Endothelial cell of umbilical vein (primary cell): ENCODE measurements at regions of chr4 and their contacts with region 1.

Region 1: DNA sequence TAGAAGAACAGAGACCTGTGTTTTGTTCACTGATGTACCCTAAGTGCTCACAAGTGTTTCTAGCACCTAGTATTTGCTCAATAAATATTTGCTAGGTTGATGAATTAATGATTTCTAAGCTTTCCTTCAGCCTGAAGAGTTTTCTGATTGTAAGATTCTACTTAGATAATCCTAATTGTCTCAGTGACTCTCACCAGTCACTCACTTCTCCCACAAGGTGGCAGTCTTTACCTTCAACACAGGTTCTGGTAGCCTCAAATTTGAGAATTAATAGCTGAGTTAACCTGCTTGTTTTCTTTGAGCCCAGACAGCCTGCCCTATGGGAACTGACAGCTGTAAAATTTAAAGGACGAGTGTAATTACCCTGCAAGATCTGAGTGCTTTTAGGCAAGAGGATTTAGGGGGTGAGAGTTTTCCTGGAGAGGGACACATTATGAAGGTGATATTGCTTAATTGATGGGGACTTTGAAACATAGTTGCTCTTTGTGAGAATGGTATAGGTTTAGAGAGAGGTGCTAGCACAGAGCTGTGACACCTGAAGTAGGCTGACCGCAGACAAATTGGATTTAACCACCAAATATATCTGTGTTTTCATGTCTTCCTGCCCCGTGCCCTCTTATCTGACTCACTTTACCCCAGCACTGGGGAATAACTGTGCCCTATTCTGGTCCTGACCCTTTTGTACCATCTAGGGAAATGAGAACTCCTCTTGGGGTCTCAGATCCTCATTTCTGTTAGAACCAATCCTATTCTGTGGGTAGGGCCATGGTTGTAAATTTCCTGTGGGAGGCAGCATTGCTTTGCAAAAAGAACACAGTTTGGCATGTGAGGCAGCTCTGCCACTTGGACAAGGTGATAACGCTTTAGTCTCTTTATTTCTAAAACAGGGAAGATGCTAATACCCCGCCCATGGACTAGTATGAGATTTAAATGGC is 27.7 kb downstream of the CD38 start:
- DNase-seq: peak; percentile 58
- H3K4me3 ChIP-seq: no peak overlapping the region
- H3K27ac ChIP-seq: no peak overlapping the region
- H3K4me1 ChIP-seq: peaks cover 4% of the 10 kb centered on the region
- H3K27me3 ChIP-seq: peaks cover 15 to 28% of the 10 kb centered on the region in 2 experiments
- CTCF ChIP-seq: peak; percentile 63 to 65
- POLR2A ChIP-seq: no peak

Region 2: DNA sequence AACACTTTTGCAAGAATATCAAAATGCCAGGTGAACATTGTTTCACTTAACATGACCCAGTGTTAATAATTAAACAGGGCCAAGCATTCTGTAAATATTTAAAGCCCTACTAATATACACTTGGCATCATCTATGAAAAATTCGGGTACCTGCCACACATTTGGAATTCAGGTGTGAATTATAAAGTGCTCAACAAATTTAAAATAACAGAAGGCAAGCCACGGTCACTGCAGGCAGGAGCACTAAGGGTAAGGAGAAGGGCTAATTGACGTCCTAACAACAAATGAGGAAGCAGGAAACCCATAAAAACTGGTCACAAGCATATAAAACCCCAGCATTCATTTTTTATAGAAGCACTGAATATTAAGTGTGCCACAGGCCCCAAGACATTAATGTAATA is 847.4 kb before region 1 on chr4:
- CTCF ChIA-PET with region 1: no interaction called
- POLR2A ChIA-PET with region 1: no interaction called
- dilution Hi-C with region 1: no loop called
- intact Hi-C with region 1: no loop called
- DNase-seq: no peak
- H3K4me3 ChIP-seq: no peak overlapping the region
- H3K27ac ChIP-seq: no peak overlapping the region
- H3K4me1 ChIP-seq: no peaks in the 10 kb centered on the region
- H3K27me3 ChIP-seq: no peaks in the 10 kb centered on the region
- CTCF ChIP-seq: no peak
- POLR2A ChIP-seq: no peak

Region 3: DNA sequence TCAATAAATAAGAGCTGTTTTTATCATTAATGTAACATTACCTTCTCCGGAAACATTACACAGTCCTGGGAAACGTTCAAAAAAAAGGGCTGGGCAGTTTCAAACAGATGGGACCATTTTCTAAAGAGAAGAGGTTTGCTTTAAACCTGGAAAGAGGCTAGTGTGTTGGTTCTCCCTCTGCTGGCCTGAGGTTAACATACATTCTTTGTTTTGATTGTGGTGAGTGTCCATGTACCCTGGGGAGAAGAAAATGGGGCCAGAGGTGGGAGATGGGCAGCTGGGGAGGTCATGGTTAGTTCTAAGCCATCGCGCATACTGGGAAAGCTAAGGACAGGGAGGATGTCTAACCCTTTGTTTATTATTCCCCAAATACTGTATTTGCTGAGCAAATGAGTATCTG is 608.8 kb before region 1 on chr4:
- CTCF ChIA-PET with region 1: no interaction called
- POLR2A ChIA-PET with region 1: no interaction called
- dilution Hi-C with region 1: no loop called
- intact Hi-C with region 1: no loop called
- DNase-seq: peak; percentile 5
- H3K4me3 ChIP-seq: no peak overlapping the region
- H3K27ac ChIP-seq: no peak overlapping the region
- H3K4me1 ChIP-seq: no peaks in the 10 kb centered on the region
- H3K27me3 ChIP-seq: no peaks in the 10 kb centered on the region
- CTCF ChIP-seq: no peak
- POLR2A ChIP-seq: no peak

Region 4: DNA sequence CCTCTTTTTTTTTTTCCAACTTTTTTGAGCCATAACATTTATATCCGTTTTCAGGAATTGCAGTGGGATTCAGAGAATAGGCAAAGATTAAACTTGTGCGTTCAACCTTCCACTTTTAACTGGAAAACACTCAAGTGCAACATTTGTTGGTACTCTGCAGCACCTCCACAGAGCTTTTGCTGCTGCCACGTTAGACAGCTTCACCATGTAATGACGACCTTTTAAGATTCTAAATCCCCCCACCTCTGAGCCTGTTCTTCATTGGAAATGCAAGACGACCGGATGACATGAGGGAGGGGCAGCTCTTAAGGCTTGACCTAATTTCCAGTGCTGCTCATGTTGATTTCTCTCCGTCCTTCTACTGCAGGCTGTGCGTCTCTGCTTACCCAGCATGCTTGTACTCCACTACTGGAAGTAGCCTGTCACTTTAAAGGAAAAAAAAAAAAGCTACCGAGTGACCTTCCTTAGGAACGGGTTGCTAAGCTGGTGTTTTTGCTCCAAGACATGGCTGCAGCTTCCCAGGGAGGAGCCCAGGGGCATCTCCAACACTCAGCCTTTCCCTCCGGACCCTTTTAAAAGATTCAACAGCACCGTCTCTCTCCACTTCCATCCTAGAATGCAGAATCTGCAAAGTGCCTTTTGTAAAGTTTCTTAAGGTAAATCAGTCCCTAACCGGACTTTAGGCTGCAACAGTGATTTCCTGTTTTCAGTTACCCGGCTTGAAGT is 336.3 kb before region 1 on chr4 and contains the start of gene CC2D2A:
- CTCF ChIA-PET with region 1: interaction called, 10 read pairs
- POLR2A ChIA-PET with region 1: no interaction called
- dilution Hi-C with region 1: no loop called
- intact Hi-C with region 1: no loop called
- DNase-seq: peak; percentile 67
- H3K4me3 ChIP-seq: peak within 1 kb of the TSS; percentile 44 to 83 (median 51)
- H3K27ac ChIP-seq: no peak within 1 kb of the TSS
- H3K4me1 ChIP-seq: peaks cover 3% of the 10 kb centered on the region
- H3K27me3 ChIP-seq: peaks cover 2 to 10% of the 10 kb centered on the region in 2 experiments
- CTCF ChIP-seq: no peak
- POLR2A ChIP-seq: no peak
- total RNA-seq, gene CC2D2A: 13.2 and 22.4 TPM in 2 replicates

Region 5: DNA sequence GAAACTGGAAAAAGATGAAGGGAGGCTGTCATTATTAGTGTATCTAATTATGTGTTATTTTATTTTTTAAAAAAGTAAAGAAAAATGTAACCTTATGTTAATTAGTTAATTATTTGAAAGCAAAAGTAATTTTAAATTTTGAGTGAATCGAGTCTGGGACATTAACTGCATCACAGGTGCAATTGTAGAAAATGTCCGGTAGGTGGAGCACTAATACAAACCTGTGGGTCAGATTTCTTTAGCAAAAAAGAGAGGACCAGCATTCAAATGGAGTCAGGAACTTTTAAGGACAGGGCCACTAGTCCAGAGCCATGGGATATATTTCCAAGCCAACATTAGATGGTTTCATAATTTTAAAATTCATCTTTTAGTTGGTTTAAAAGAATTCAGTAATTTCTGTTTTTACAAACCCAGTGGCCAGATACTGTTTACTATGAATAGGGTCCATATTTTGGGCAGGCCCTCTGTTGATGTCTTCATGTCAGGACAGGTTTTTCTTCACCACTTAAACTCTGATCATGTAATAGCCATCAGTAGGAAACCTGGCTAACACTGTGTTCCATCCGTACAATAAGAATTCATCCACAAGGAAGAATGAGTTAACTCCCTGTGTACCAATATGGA is 75.8 kb before region 1 on chr4:
- CTCF ChIA-PET with region 1: interaction called, 6 read pairs
- POLR2A ChIA-PET with region 1: no interaction called
- dilution Hi-C with region 1: no loop called
- intact Hi-C with region 1: loop called (anchors 1 kb)
- DNase-seq: peak; percentile 41
- H3K4me3 ChIP-seq: no peak overlapping the region
- H3K27ac ChIP-seq: no peak overlapping the region
- H3K4me1 ChIP-seq: no peaks in the 10 kb centered on the region
- H3K27me3 ChIP-seq: no peaks in the 10 kb centered on the region
- CTCF ChIP-seq: peak; percentile 61 to 65
- POLR2A ChIP-seq: no peak

Region 6: DNA sequence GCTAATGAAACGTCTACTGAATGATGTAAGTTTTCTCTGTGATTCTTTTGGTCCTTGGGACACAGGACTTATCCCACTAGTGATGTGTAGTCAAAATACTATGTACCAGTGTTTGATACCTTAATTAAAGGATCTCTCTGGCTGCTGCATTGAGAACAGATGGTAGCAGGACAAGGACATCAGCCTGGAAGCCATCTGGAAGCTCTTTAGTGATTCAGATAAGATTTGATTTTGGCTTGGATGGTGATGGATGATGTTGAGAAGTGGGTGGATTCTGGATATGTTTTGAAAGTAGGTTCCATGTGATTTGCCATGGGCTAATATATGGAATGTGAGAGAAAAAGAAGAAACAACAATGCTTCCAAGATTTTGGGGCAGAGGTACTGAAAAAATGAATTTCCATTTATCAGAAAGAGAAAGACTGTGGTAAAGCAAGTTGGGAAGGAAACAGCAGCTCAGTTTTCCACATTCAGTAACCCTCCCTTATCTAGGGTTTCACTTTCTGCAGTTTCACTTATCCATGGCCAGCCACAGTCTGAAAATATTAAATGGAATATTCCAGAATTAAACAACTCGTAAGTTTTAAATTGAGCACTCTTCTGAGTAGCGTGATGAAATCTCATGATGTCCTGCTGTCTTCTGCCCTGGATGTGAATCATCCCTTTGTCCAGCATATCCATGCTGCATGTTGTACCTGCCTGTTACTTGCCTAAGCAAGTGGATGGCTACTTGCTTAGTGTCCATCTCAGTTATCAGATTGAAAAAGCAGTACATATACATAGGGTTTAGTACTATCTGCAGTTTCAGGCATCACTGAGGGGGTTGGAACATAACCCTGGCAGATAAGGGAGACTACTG is 12.1 kb before region 1 on chr4:
- CTCF ChIA-PET with region 1: interaction called, 16 read pairs
- POLR2A ChIA-PET with region 1: no interaction called
- dilution Hi-C with region 1: no loop called
- intact Hi-C with region 1: no loop called
- DNase-seq: no peak
- H3K4me3 ChIP-seq: no peak overlapping the region
- H3K27ac ChIP-seq: no peak overlapping the region
- H3K4me1 ChIP-seq: no peaks in the 10 kb centered on the region
- H3K27me3 ChIP-seq: peaks cover 4 to 5% of the 10 kb centered on the region in 2 experiments
- CTCF ChIP-seq: no peak
- POLR2A ChIP-seq: no peak

Region 7: DNA sequence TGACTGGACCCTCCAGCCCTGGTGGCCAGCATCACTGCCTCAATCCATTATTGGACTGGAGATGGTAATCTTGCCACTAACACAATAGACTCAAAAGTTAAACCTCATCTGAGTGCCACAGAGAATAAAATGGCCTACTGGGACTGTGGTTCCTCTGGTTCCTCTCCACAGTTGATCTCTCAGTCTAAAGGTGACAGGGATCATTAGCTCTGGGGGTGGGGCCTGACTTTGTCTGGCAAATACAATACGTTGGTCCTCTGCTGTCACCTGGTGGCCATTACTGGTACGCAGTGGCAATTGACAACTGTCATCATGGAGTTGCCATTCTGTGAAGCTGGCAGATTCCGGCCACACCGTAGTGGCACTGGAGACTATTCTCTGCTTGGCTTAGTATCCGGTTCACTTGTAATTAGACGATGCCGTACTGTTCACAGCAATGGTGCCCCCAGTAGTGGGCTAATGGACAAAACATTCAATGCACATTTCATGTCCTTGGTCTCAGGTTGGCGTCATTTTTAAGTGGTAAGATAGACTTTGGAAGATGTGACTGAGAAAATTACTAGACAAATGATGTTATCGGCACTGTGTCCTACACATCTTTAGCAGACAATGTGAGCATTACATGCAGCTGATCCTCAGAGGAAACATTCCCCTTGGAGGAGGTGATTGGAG is 150.5 kb after region 1 on chr4:
- CTCF ChIA-PET with region 1: interaction called, 161 read pairs
- POLR2A ChIA-PET with region 1: no interaction called
- dilution Hi-C with region 1: no loop called
- intact Hi-C with region 1: loop called (anchors 1 kb)
- DNase-seq: peak; percentile 69
- H3K4me3 ChIP-seq: no peak overlapping the region
- H3K27ac ChIP-seq: no peak overlapping the region
- H3K4me1 ChIP-seq: no peaks in the 10 kb centered on the region
- H3K27me3 ChIP-seq: no peaks in the 10 kb centered on the region
- CTCF ChIP-seq: peak; percentile 75 to 84
- POLR2A ChIP-seq: no peak

Region 8: GRCh38 chr4:16196478-16197393 is 390.9 kb after region 1 on chr4:
- CTCF ChIA-PET with region 1: interaction called, 10 read pairs
- POLR2A ChIA-PET with region 1: no interaction called
- dilution Hi-C with region 1: no loop called
- intact Hi-C with region 1: no loop called
- DNase-seq: peak; percentile 83
- H3K4me3 ChIP-seq: peak overlapping the region in 2 of 3 experiments; percentile 34 to 67
- H3K27ac ChIP-seq: peak overlapping the region; percentile 68
- H3K4me1 ChIP-seq: peaks cover 27% of the 10 kb centered on the region
- H3K27me3 ChIP-seq: no peaks in the 10 kb centered on the region
- CTCF ChIP-seq: peak; percentile 28 to 32
- POLR2A ChIP-seq: no peak